CD4-positive, alpha-beta memory T cell (primary cell): ENCODE measurements at regions of chr15 and their contacts with region 1.

Region 1: GRCh38 chr15:68053701-68054627 is at the start of gene PIAS1:
- DNase-seq: peak; percentile 91 to 94 (median 92)
- H3K4me3 ChIP-seq: peak within 1 kb of the TSS; percentile 80 to 97
- H3K4me3 Mint-ChIP-seq: peak within 1 kb of the TSS; percentile 91 to 96 (median 94)
- H3K27ac ChIP-seq: peak within 1 kb of the TSS; percentile 91
- H3K27ac Mint-ChIP-seq: peak within 1 kb of the TSS; percentile 83 to 96 (median 94)
- H3K4me1 ChIP-seq: peaks cover 38% of the 10 kb centered on the region
- H3K4me1 Mint-ChIP-seq: peaks cover 26 to 44% (median 34%) of the 10 kb centered on the region in 4 donors
- H3K27me3 ChIP-seq: no peaks in the 10 kb centered on the region
- H3K27me3 Mint-ChIP-seq: peaks cover 0 to 1% of the 10 kb centered on the region in 2 donors
- total RNA-seq, gene PIAS1: 86.0 to 86.2 TPM

Region 2: DNA sequence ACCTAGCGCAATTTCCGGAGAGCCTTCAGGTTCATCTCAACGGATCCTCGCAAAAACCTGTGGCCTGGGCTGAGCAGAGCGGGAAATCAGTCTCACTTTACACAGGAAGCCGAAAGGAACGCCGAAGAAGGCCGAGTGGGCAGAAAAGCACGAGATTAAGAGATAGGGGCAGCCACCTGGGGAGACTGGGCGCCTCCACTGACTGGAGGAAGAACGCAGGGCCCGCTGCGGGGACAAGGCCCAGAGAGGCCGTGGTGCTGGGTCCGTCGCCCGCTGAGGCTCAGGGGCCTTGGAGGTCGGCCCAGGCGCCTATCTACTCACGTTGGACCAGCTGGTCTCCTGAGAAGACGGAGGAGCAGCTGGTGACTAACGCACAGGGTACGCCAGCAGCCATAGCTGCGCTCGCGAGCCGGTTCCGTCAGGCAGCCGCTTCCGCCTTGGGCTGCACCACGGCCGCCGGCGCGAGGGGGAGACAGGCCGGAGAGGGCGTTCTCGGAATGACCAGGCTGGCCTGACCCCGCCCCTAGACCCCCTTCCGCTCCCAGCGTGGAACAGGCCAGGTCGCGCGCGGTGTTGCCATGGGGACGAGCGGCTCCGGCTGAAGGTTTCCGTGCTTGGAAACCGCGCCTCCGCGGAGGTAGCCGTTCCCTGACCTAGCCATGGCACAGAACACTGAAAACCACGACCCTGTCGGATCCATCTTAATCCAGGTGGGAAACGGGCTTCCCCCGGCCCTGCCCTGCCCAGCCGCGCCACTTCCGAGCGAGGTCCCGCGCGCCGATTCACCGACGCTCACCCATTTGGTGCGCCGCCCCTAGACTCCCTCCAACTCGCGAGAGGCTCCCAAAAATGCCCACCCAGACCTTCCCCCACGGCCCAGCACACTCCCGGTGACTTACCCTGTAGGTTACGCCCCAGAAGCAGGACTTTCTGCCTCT is 799.5 kb before region 1 on chr15 and contains the starts of genes AAGAB and IQCH:
- CTCF ChIA-PET with region 1: no interaction called
- POLR2A ChIA-PET with region 1: no interaction called
- intact Hi-C with region 1: loop called (anchors 10 kb)
- DNase-seq: peak; percentile 93 to 97 (median 95)
- H3K4me3 ChIP-seq: peak within 1 kb of the TSS; percentile 96 to 98
- H3K4me3 Mint-ChIP-seq: peak within 1 kb of the TSS; percentile 96 to 99 (median 98)
- H3K27ac ChIP-seq: peak within 1 kb of the TSS; percentile 85
- H3K27ac Mint-ChIP-seq: peak within 1 kb of the TSS; percentile 89 to 99 (median 96)
- H3K4me1 ChIP-seq: peaks cover 34% of the 10 kb centered on the region
- H3K4me1 Mint-ChIP-seq: peaks cover 26 to 54% (median 40%) of the 10 kb centered on the region in 4 donors
- H3K27me3 ChIP-seq: no peaks in the 10 kb centered on the region
- H3K27me3 Mint-ChIP-seq: no peaks in the 10 kb centered on the region
- total RNA-seq, gene AAGAB: 30.2 to 30.3 TPM
- total RNA-seq, gene IQCH: 1.1 to 2.1 TPM

Region 3: DNA sequence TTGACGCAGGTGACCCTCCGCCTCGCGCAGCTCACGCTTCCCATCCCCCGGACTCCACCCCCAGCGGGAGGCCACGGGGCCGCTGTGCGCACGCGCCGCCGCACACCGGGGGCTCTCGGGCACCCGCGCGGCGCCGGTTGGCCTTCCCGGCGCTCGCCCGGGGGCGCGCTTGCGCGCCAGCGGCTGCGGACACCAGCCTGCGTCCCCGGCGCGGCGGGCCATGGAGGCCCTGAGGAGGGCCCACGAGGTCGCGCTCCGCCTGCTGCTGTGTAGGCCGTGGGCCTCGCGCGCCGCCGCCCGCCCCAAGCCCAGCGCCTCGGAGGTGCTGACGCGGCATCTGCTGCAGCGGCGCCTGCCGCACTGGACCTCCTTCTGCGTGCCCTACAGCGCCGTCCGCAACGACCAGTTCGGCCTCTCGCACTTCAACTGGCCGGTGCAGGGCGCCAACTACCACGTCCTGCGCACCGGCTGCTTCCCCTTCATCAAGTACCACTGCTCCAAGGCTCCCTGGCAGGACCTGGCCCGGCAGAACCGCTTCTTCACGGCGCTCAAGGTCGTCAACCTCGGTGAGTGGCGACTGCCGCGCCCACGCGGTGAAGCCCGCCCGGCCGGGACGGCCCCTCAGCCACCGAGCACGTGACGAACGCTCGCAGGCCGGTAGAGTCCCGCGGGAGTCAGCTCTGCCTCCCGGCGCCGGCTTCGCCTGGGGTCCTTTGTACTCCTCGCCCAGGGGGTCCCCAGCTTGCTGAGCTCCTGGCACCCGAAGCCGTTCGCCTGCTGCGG is 532.7 kb before region 1 on chr15 and contains the start of gene C15orf61:
- CTCF ChIA-PET with region 1: no interaction called
- POLR2A ChIA-PET with region 1: no interaction called
- intact Hi-C with region 1: loop called (anchors 2 kb)
- DNase-seq: peak; percentile 86 to 89 (median 87)
- H3K4me3 ChIP-seq: peak within 1 kb of the TSS; percentile 64 to 93
- H3K4me3 Mint-ChIP-seq: peak within 1 kb of the TSS; percentile 90 to 96 (median 93)
- H3K27ac ChIP-seq: peak within 1 kb of the TSS; percentile 70
- H3K27ac Mint-ChIP-seq: peak within 1 kb of the TSS; percentile 93 to 97 (median 97)
- H3K4me1 ChIP-seq: peaks cover 33% of the 10 kb centered on the region
- H3K4me1 Mint-ChIP-seq: peaks cover 18 to 37% (median 26%) of the 10 kb centered on the region in 4 donors
- H3K27me3 ChIP-seq: no peaks in the 10 kb centered on the region
- H3K27me3 Mint-ChIP-seq: no peaks in the 10 kb centered on the region
- total RNA-seq, gene C15orf61: 9.5 to 13.4 TPM

Region 4: GRCh38 chr15:68229386-68230156 is 175.6 kb after region 1 on chr15 and contains the start of gene CLN6:
- CTCF ChIA-PET with region 1: no interaction called
- POLR2A ChIA-PET with region 1: interaction called, 14 read pairs
- intact Hi-C with region 1: loop called (anchors 1 kb)
- DNase-seq: peak; percentile 78 to 89 (median 84)
- H3K4me3 ChIP-seq: peak within 1 kb of the TSS; percentile 78 to 91
- H3K4me3 Mint-ChIP-seq: peak within 1 kb of the TSS; percentile 90 to 99 (median 92)
- H3K27ac ChIP-seq: peak within 1 kb of the TSS; percentile 57
- H3K27ac Mint-ChIP-seq: peak within 1 kb of the TSS; percentile 80 to 98 (median 97)
- H3K4me1 ChIP-seq: peaks cover 20% of the 10 kb centered on the region
- H3K4me1 Mint-ChIP-seq: peaks cover 20 to 30% (median 25%) of the 10 kb centered on the region in 4 donors
- H3K27me3 ChIP-seq: no peaks in the 10 kb centered on the region
- H3K27me3 Mint-ChIP-seq: no peaks in the 10 kb centered on the region
- total RNA-seq, gene CLN6: 14.5 to 15.6 TPM